HepG2 (cell line): ENCODE measurements at regions of chr18 and their contacts with region 1.

Region 1: DNA sequence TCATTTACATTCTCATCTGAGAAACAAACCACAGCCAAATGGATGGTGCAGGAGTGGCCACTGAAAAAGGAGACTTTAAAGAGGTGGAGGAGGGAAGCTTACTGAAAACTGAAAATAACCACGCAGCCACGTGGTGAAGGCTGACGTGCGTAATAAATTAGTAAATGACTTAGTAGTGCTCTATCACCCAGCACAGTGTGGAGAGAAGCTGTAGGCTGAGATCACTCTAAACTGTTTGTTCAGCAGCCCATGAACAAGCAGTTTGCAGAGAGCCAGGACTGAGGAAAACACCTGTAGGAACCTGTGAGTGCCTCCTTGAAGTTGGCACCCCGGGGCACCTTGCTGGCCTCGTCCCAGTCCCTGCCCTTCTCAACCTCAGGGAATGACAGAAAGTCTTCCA is 193.0 kb downstream of the TXNL1 start:
- DNase-seq: no peak
- ATAC-seq: no peak
- H3K4me3 ChIP-seq: no peak overlapping the region
- H3K27ac ChIP-seq: no peak overlapping the region
- H3K4me1 ChIP-seq: no peaks in the 10 kb centered on the region
- H3K27me3 ChIP-seq: no peaks in the 10 kb centered on the region
- CTCF ChIP-seq: no peak
- EP300 ChIP-seq: no peak
- POLR2A ChIP-seq: no peak
- RAD21 ChIP-seq: no peak

Region 2: GRCh38 chr18:55833543-55833942 is 611.9 kb before region 1 on chr18:
- CTCF ChIA-PET with region 1: no interaction called
- POLR2A ChIA-PET with region 1: no interaction called
- in situ Hi-C with region 1: no loop called
- intact Hi-C with region 1: loop called (anchors 5 kb)
- DNase-seq: no peak
- ATAC-seq: no peak
- H3K4me3 ChIP-seq: no peak overlapping the region
- H3K27ac ChIP-seq: no peak overlapping the region
- H3K4me1 ChIP-seq: no peaks in the 10 kb centered on the region
- H3K27me3 ChIP-seq: no peaks in the 10 kb centered on the region
- CTCF ChIP-seq: no peak
- EP300 ChIP-seq: no peak
- POLR2A ChIP-seq: no peak
- RAD21 ChIP-seq: no peak